Ascending aorta (tissue), 2 donors: ENCODE measurements at regions of chr1 and their contacts with region 1.

Region 1: GRCh38 chr1:3352299-3352951 is 102.0 kb upstream of the ARHGEF16 start:
- DNase-seq: peak; percentile 71 to 95
- H3K4me3 ChIP-seq: peak overlapping the region; percentile 36 to 40
- H3K27ac ChIP-seq: peak overlapping the region; percentile 89 to 98
- H3K4me1 ChIP-seq: peaks cover 70 to 95% of the 10 kb centered on the region in 2 donors
- H3K27me3 ChIP-seq: no peaks in the 10 kb centered on the region
- CTCF ChIP-seq: no peak

Region 2: DNA sequence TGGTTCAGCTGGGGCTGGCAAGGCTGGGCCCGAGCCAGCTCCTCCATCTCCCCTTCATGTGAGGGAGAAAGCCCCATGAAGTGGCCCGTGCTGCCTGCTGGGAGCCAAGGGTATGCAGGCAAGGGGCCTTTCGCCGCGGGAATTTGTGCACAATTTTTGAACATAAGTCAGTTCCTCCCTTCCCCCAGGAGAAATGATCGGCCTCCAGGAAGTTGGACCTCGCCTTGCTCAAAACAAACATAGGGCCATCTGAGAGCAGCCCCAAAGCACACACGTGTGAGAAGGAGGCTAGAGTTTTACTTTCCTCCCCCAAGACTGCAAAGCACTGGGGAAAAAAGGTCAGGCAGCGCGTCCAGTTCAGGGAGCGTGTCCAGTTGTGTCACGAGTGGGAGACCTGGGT is 218.7 kb before region 1 on chr1:
- intact Hi-C with region 1: loop called (anchors 2 kb)
- DNase-seq: peak in 1 of 2 donors; percentile 81
- H3K4me3 ChIP-seq: peak overlapping the region; percentile 24 to 45
- H3K27ac ChIP-seq: peak overlapping the region; percentile 83 to 85
- H3K4me1 ChIP-seq: peaks cover 32 to 83% of the 10 kb centered on the region in 2 donors
- H3K27me3 ChIP-seq: no peaks in the 10 kb centered on the region
- CTCF ChIP-seq: no peak

Region 3: GRCh38 chr1:3312898-3313575 is 39.4 kb before region 1 on chr1:
- intact Hi-C with region 1: loop called (anchors 2 kb)
- DNase-seq: peak; percentile 93 to 99
- H3K4me3 ChIP-seq: peak overlapping the region; percentile 11 to 57
- H3K27ac ChIP-seq: peak overlapping the region; percentile 98 to 99
- H3K4me1 ChIP-seq: peaks cover 23 to 65% of the 10 kb centered on the region in 2 donors
- H3K27me3 ChIP-seq: no peaks in the 10 kb centered on the region
- CTCF ChIP-seq: no peak

Region 4: DNA sequence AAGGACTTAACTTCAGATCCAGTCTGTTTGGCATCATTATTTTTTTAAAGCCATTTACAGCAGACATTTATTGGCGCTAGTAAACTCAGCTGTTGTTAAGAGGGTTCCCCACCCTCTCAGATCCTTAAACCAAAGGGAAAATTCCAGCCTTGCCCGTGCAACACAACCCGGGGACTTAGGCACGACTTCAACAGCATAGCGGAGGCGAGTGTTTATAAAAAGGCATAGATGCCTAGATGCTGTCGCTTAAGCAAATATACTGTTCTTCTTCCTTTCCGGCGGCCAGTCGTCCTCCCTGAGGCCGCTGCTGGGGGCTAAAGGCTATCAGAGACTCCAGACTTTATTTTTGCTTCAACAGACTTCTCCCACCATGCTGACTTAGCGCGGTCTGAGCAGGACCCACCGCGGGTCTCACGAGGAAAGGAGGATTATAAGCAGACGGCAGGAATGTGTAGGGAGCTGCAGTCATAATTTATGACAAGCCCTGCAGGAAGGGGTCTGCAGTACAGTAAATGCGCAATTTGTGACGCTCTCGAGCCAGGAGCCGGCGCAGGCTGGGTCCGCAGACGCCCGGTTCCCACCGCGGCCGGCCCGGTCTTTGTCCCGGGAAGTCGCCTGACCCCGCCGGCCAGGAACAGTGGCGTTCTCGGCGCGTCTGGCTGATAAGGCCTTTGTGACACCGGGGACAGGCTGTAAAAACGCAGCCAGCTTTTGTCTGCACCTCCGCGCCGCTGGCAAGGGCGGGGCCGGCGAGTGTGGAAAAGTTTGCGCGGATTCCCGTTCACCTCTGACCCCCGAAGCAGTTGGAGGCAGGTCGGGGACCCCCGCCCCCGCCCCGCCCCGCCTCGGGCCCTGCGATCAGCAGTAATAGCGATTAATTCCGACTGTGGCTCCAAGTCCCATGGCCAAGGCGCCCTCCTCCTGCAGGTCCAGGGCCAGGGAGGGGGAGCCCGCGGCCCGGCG is 40.9 kb after region 1 on chr1:
- intact Hi-C with region 1: loop called (anchors 1 kb)
- DNase-seq: no peak
- H3K4me3 ChIP-seq: peak overlapping the region; percentile 53 to 67
- H3K27ac ChIP-seq: peak overlapping the region; percentile 97 to 99
- H3K4me1 ChIP-seq: peaks cover 12 to 60% of the 10 kb centered on the region in 2 donors
- H3K27me3 ChIP-seq: no peaks in the 10 kb centered on the region
- CTCF ChIP-seq: no peak

Region 5: DNA sequence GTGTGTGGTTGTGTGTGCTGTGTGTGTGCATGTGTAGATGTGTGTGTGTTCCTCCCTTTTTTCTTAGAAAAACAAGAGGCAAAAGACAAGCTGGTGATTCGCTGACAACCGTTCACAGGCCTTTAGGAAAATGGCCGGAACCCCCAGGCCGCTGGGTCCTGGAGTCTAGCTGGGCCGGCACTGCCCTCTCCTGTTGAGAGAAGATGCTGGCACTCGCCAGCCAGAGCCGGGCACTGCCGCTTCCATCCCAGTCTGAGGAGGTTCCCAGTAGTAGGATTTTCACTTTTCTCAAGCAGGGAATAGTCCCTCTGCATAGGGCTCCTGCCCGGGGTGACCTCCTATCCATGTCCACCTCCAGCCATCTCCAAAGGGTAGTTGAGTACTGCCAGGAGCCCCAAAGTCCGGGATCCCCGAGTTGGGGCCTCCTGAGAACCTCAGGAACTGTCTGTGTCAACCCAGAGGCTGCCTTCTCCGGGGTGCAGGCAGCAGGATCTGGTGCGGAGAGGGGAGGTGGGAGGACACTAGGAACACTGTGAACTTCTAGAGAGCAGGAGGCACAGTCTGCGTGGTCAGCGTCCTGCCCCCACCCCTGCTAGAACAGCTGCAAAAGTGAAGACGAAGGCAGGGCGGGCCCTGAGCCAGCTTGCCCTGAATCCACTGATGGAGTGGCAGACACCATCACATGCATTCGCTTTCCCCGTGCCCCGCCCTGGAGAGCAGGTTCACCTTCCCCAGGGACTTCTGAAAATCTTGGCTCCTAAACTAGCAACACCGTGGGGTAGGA is 57.9 kb after region 1 on chr1:
- intact Hi-C with region 1: no loop called
- DNase-seq: peak in 1 of 2 donors; percentile 77
- H3K4me3 ChIP-seq: no peak overlapping the region
- H3K27ac ChIP-seq: peak overlapping the region in 1 of 2 donors; percentile 13
- H3K4me1 ChIP-seq: peaks cover 0 to 3% of the 10 kb centered on the region in 2 donors
- H3K27me3 ChIP-seq: no peaks in the 10 kb centered on the region
- CTCF ChIP-seq: peak; percentile 79 to 85 (median 79)